ENCODE measurements at regions of chr1 and their contacts with region 1.

Region 1: GRCh38 chr1:226827968-226828513 is 42.4 kb upstream of the PSEN2 start:
- DNase-seq: peak; percentile 96 to 97
- H3K4me3 ChIP-seq: peak overlapping the region in 2 of 4 donors; percentile 0 to 1
- H3K27ac ChIP-seq: peak overlapping the region; percentile 16 to 86 (median 80)
- H3K4me1 ChIP-seq: peaks cover 6 to 20% (median 14%) of the 10 kb centered on the region in 4 donors
- H3K27me3 ChIP-seq: no peaks in the 10 kb centered on the region
- CTCF ChIP-seq: peak in 6 of 7 experiments; percentile 39 to 93 (median 90)
- EP300 ChIP-seq: no peak
- POLR2A ChIP-seq: no peak

Region 2: GRCh38 chr1:226201029-226201593 is 626.9 kb before region 1 on chr1:
- intact Hi-C with region 1: no loop called
- DNase-seq: no peak
- H3K4me3 ChIP-seq: no peak overlapping the region
- H3K27ac ChIP-seq: no peak overlapping the region
- H3K4me1 ChIP-seq: peaks cover 0 to 7% (median 0%) of the 10 kb centered on the region in 4 donors
- H3K27me3 ChIP-seq: no peaks in the 10 kb centered on the region
- CTCF ChIP-seq: peak in 1 of 7 experiments; percentile 11
- EP300 ChIP-seq: no peak
- POLR2A ChIP-seq: no peak

Region 3: GRCh38 chr1:226634166-226634588 is 193.9 kb before region 1 on chr1:
- intact Hi-C with region 1: loop called (anchors 5 kb)
- DNase-seq: peak; percentile 86 to 92
- H3K4me3 ChIP-seq: no peak overlapping the region
- H3K27ac ChIP-seq: peak overlapping the region in 4 of 5 donors; percentile 62 to 85 (median 68)
- H3K4me1 ChIP-seq: peaks cover 30 to 70% (median 43%) of the 10 kb centered on the region in 4 donors
- H3K27me3 ChIP-seq: no peaks in the 10 kb centered on the region
- CTCF ChIP-seq: peak in 5 of 7 experiments; percentile 79 to 95 (median 89)
- EP300 ChIP-seq: no peak
- POLR2A ChIP-seq: no peak

Region 4: GRCh38 chr1:226736908-226737818 is 90.9 kb before region 1 on chr1:
- intact Hi-C with region 1: loop called (anchors 10 kb)
- DNase-seq: peak; percentile 47 to 82
- H3K4me3 ChIP-seq: peak overlapping the region; percentile 76 to 98 (median 90)
- H3K27ac ChIP-seq: peak overlapping the region; percentile 73 to 96 (median 91)
- H3K4me1 ChIP-seq: peaks cover 26 to 64% (median 44%) of the 10 kb centered on the region in 4 donors
- H3K27me3 ChIP-seq: no peaks in the 10 kb centered on the region
- CTCF ChIP-seq: peak in 1 of 7 experiments; percentile 6
- EP300 ChIP-seq: no peak
- POLR2A ChIP-seq: no peak

Measured in stomach (tissue), 19 donors.